ENCODE measurements at regions of chr6 and their contacts with region 1.

Region 1: DNA sequence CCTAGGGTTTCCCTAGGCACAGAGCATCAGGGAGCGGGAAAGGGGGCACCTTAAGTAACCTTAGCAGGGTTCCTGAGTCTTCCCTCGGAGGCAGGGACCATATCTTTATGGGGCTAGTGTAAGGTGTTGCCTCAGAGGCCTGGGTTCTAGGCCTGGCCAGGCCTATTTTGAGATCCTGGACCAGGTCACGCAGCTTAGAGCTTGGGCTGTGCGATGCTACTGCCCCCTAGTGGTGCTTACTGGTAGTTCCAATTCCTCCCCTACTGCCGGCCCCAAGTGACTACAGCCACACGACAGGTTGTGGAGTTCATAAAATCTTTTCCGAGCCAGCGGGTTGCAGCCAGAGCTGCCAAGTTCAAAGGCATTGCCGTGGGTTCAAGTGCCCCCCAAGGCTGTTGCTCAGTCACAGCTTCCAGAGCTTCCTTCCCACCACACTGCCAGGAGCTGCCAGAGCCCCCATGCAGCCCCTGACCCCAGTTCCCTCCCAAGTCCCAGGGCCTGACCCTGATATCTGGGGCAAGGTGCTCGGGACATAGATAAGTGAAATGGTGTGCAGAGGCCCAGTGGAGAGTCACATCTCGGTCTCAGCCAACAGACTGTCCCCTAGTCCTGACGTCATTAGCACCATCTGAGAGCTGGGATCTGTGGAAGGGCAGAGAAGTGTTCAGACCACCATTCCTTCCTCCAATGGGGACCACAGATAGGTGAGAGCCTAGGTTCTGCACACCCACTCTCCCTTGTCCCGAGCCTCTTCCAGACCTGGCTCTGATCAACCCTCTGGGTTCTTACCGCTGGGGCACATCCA is 3.3 kb downstream of the LRRC73 start:
- DNase-seq: peak; percentile 87
- H3K4me3 Mint-ChIP-seq: no peak overlapping the region
- H3K27ac Mint-ChIP-seq: no peak overlapping the region
- H3K4me1 Mint-ChIP-seq: peaks cover 12% of the 10 kb centered on the region
- H3K27me3 Mint-ChIP-seq: peaks cover 17% of the 10 kb centered on the region

Region 2: DNA sequence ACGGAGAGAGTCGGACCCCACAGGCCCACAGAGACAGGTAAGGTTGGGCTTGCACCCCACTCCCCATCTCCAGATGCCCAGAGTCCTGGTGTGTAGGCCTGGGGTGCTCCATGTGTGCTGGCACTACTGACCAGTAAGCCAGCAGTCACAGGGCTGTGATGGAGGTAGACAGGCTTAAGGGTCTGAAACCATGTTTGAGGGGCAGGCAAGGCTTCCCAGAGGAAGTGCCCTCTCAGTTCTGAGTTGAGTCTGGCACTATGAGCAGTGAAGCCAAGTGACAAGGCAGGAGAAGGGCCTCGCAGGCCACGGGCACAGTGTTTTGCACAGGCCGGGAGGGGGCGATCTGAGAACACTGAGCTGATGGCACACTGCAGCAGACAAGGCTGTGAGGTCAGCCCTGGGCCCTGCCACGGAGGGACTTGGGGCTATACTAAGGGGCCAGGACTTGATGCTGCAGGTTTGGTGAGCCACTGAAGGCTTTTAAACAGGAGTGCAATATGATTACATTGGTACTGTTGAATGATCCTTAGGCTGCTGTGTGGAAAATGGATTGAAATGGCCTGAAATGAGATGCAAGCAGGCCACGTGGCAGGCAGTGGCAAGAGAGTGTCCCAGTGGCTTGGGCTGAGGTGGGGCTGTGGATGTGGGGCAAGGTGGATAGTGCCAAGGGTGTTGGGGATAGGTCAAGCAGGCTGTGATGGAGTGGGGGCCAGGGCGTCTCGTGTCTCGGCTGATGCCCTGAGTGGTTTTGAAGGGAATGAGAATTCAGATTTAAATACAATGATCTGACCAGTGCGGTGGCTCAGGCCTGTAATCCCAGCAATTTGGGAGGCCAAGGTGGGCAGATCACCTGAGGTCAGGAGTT is 243.3 kb before region 1 on chr6:
- CTCF ChIA-PET with region 1: interaction called, 60 read pairs
- POLR2A ChIA-PET with region 1: no interaction called
- intact Hi-C with region 1: loop called (anchors 1 kb)
- DNase-seq: peak; percentile 86
- H3K4me3 Mint-ChIP-seq: no peak overlapping the region
- H3K27ac Mint-ChIP-seq: peak overlapping the region; percentile 24
- H3K4me1 Mint-ChIP-seq: peaks cover 2% of the 10 kb centered on the region
- H3K27me3 Mint-ChIP-seq: no peaks in the 10 kb centered on the region

Region 3: DNA sequence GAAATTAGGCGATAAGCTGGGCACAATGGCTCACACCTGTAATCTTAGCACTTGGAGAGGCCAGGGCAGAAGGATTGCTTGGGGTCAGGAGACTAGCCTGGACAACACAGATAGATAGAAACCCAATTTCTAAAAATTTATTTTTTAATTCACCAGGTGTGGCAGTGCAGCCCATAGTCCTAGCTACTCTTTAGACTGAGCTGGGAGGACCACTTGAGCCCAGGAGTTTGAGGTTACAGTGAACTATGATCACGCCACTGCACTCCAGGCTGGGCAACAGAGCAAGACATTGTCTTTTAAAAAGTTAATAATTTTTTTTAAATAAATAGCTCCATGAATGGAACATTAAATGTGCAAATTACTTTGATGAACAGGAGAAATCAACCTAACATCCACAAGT is 145.6 kb before region 1 on chr6:
- CTCF ChIA-PET with region 1: interaction called, 13 read pairs
- POLR2A ChIA-PET with region 1: no interaction called
- intact Hi-C with region 1: no loop called
- DNase-seq: no peak
- H3K4me3 Mint-ChIP-seq: no peak overlapping the region
- H3K27ac Mint-ChIP-seq: no peak overlapping the region
- H3K4me1 Mint-ChIP-seq: peaks cover 14% of the 10 kb centered on the region
- H3K27me3 Mint-ChIP-seq: no peaks in the 10 kb centered on the region

Region 4: DNA sequence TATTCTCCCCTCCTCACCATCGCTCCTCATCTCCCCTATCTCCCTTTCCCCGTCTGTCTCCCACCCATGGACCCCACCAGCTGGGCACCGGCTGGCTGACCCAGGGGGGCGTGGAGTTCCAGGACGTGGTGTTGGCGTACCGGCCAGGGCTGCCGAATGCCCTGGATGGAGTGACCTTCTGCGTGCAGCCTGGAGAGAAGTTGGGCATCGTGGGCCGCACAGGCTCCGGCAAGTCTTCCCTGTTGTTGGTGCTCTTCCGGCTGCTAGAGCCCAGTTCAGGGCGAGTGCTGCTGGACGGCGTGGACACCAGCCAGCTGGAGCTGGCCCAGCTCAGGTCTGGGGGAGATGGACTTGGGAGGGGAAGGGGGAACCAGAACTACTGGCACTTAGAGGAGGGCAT is 59.3 kb before region 1 on chr6:
- CTCF ChIA-PET with region 1: interaction called, 65 read pairs
- POLR2A ChIA-PET with region 1: no interaction called
- intact Hi-C with region 1: no loop called
- DNase-seq: no peak
- H3K4me3 Mint-ChIP-seq: no peak overlapping the region
- H3K27ac Mint-ChIP-seq: no peak overlapping the region
- H3K4me1 Mint-ChIP-seq: no peaks in the 10 kb centered on the region
- H3K27me3 Mint-ChIP-seq: no peaks in the 10 kb centered on the region

Region 5: DNA sequence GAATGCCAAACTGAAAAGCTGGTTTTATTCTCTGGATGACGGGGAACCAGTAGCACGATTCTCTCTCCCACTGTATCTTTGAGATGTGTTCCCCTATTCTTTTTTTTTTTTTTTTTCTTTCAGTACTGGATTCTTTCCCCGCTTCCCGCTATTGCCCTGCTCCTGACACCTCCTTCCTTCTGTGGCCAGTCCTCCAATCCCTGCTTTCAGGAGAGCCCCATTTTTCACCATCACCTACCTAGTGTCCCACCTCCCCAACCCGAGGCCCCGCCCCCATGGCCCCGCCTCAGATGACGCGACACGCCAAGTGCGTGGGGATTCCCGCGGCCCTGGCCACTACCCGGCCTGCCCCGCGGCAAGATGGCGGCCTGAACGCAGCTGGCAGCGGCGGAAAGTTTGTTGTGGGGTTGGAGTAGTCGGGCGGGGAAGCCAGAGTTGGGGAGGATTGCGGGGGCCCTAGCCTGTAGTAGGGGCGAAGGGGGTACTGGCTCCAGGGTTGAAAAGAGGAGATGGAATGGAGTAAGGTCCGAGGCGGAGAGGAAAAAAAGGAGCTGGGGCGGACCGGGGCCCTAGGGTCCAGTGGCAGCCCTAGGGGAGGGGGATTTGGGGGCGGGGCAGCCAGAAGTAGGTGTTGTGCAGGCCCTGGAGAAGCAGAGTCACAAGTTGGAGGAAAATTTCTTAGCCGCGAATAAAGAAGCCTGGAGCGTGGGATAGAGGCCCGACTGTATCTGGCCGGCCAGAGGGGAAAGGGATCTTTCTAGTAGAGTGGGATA is 29.4 kb before region 1 on chr6 and contains the start of gene TJAP1:
- CTCF ChIA-PET with region 1: interaction called, 7 read pairs
- POLR2A ChIA-PET with region 1: no interaction called
- intact Hi-C with region 1: loop called (anchors 2 kb)
- DNase-seq: peak; percentile 98
- H3K4me3 Mint-ChIP-seq: peak within 1 kb of the TSS; percentile 92
- H3K27ac Mint-ChIP-seq: peak within 1 kb of the TSS; percentile 87
- H3K4me1 Mint-ChIP-seq: peaks cover 48% of the 10 kb centered on the region
- H3K27me3 Mint-ChIP-seq: no peaks in the 10 kb centered on the region
- total RNA-seq, gene TJAP1: 30.5 to 36.2 TPM

Region 6: DNA sequence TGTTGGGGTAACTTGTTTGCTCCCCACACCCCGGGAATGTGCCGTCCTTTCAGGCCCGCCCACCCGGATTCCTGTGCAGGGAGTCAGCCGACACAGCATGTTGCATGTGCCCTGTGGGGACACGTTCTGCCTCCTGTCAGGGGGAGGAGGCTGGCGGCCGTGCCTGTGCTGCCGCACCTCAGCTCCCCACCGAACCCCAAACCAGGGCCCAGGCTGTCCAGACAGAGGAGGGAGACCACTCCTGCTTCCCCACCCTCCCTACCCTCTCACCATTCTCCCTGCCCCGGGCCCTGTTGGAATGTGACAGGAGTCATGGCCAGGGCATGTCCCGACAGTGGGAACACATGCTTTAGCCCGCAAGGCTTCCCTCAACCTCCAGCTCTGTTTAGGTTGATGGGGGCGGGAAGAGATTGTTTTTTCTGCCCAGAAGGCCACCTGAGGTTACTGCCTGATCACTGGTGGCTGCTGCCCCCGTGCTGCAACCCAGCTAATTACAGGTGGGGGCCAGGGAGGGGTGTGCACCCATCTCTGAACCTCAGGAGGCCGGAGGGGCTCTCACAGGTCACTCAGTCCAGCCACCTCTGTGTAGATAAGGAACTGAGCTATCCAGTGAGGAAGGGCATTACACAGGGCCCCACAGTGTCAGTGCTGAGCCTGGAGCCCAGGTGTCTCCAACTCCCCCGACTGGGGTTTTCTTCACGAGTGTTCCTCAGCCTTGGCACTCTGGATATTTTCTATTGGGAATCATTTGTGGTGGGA is 10.3 kb before region 1 on chr6:
- CTCF ChIA-PET with region 1: interaction called, 40 read pairs
- POLR2A ChIA-PET with region 1: interaction called, 3 read pairs
- intact Hi-C with region 1: no loop called
- DNase-seq: peak; percentile 34
- H3K4me3 Mint-ChIP-seq: no peak overlapping the region
- H3K27ac Mint-ChIP-seq: no peak overlapping the region
- H3K4me1 Mint-ChIP-seq: peaks cover 25% of the 10 kb centered on the region
- H3K27me3 Mint-ChIP-seq: no peaks in the 10 kb centered on the region